ENCODE measurements at regions of chr6 and their contacts with region 1.

Region 1: GRCh38 chr6:77839292-77839691 is 186.5 kb downstream of the MEI4 start:
- DNase-seq: no peak
- H3K27ac ChIP-seq: no peak overlapping the region
- CTCF ChIP-seq: no peak

Region 2: GRCh38 chr6:78268591-78269452 is 429.5 kb after region 1 on chr6:
- CTCF ChIA-PET with region 1: interaction called, 10 read pairs
- POLR2A ChIA-PET with region 1: no interaction called
- DNase-seq: no peak
- H3K27ac ChIP-seq: no peak overlapping the region
- CTCF ChIP-seq: no peak